ENCODE measurements at regions of chr6 and their contacts with region 1.

Region 1: DNA sequence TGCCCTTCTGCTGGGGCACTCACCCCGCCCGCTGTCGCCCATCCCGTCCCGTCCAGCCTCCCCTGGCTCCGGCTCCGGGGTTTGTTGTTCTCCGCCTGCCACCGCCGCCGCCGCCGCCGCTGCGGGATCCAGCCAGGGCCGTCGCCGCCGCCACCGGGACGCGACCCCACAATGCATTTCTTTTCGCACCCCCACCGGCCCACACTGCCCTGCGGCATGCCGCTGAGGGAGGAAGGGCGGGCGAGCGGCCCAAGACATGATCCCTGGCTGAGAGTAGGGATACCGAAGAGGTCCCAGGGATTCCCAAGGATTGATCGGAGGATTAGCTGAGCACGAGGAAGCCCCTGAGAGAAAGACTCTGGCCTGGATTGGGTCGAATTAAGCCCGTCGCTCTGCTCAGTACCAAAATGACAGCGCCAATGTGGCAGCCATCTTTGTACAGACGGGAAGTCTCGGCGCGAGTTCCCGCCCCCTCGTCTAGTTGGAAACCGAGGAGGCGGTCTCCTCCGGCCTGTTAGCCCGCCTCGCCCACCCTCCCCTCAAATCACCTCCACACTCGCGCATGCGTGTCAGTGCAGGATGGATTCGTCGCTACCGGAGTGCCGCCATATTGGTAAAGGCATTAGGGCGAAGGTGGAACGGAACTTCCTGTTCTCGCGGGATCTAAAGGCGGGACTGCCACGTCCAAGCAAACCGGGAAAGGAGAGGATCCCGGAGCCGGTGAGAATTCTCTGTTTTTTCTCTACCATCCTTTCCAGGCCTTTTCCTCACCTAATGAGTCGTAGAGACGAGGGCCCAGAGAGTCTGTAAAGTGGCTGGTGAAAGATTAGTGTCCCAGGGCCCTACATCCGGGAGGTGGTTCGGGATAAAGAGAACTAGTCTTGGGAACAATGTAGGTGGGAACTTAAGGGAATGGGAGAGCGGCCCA is at the starts of genes RXRB and SLC39A7:
- DNase-seq: peak; percentile 100
- H3K4me3 ChIP-seq: peak within 1 kb of the TSS; percentile 77 to 90 (median 84)
- H3K27ac ChIP-seq: peak within 1 kb of the TSS; percentile 91 to 98 (median 96)
- H3K4me1 ChIP-seq: peaks cover 0 to 68% (median 52%) of the 10 kb centered on the region in 4 donors
- H3K27me3 ChIP-seq: no peaks in the 10 kb centered on the region
- CTCF ChIP-seq: no peak
- EP300 ChIP-seq: peak in 1 of 4 donors; percentile 16
- POLR2A ChIP-seq: peak; percentile 30 to 39
- total RNA-seq, gene RXRB: 27.8 to 32.4 (median 30.4) TPM
- total RNA-seq, gene SLC39A7: 48.7 to 52.1 (median 49.8) TPM

Region 2: GRCh38 chr6:32853541-32854375 is 346.7 kb before region 1 on chr6 and contains the starts of genes PSMB9 and TAP1:
- intact Hi-C with region 1: loop called (anchors 5 kb)
- DNase-seq: peak; percentile 99
- H3K4me3 ChIP-seq: peak within 1 kb of the TSS; percentile 80 to 90 (median 82)
- H3K27ac ChIP-seq: peak within 1 kb of the TSS; percentile 96 to 99 (median 98)
- H3K4me1 ChIP-seq: peaks cover 0 to 35% (median 26%) of the 10 kb centered on the region in 4 donors
- H3K27me3 ChIP-seq: no peaks in the 10 kb centered on the region
- CTCF ChIP-seq: peak; percentile 71 to 89 (median 82)
- EP300 ChIP-seq: peak in 2 of 4 donors; percentile 53 to 69
- POLR2A ChIP-seq: peak; percentile 97 to 98
- total RNA-seq, gene PSMB9: 10.2 to 23.2 (median 13.8) TPM
- total RNA-seq, gene TAP1: 22.5 to 35.0 (median 24.6) TPM

Region 3: GRCh38 chr6:33161354-33162331 is 38.8 kb before region 1 on chr6:
- intact Hi-C with region 1: loop called (anchors 2 kb)
- DNase-seq: peak; percentile 89
- H3K4me3 ChIP-seq: peak overlapping the region; percentile 40 to 58 (median 45)
- H3K27ac ChIP-seq: peak overlapping the region; percentile 72 to 90 (median 79)
- H3K4me1 ChIP-seq: peaks cover 0 to 21% (median 17%) of the 10 kb centered on the region in 4 donors
- H3K27me3 ChIP-seq: no peaks in the 10 kb centered on the region
- CTCF ChIP-seq: peak; percentile 87 to 94 (median 92)
- EP300 ChIP-seq: no peak
- POLR2A ChIP-seq: no peak

Region 4: DNA sequence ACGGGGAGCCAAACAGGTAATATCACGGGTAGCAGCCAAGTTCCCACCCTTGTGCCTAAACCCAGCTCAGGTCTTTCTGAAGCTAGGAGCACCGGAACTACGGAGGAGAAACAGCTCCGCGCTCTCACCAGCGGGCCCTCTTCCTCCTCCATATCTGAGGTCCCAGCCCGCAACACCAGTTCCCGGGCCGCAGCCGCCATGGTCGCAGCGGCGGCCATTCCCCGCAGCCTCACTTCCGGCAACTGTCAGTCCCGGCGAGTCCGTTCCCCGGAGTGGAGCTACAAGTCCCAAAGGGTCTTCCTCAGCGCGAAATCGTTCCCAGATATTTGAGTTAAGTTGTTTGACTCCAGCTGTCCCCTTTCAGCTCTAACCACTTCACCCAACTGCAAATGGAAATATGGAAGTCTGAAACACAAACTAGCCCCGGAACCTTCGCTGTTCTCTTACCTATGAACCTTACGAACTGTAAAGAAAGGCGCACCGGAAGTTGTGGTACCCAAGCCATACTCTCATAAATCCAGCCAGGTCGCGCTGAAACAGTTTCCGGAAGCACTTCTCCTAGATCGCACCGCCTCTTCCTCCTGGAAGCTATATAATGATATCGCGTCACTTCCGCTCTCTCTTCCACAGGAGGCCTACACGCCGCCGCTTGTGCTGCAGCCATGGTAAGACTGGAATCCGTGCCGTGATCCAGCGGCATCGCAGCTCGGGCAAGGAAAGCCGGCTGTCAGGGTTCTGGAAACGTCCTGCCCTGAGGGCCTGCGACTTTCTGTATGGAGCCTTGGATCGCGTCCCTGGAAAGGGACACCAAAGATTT is 71.2 kb after region 1 on chr6 and contains the starts of genes RPS18 and VPS52:
- intact Hi-C with region 1: loop called (anchors 5 kb)
- DNase-seq: peak; percentile 99
- H3K4me3 ChIP-seq: peak within 1 kb of the TSS; percentile 56 to 88 (median 72)
- H3K27ac ChIP-seq: peak within 1 kb of the TSS; percentile 89 to 96 (median 90)
- H3K4me1 ChIP-seq: peaks cover 0 to 61% (median 57%) of the 10 kb centered on the region in 4 donors
- H3K27me3 ChIP-seq: no peaks in the 10 kb centered on the region
- CTCF ChIP-seq: no peak
- EP300 ChIP-seq: peak in 1 of 4 donors; percentile 11
- POLR2A ChIP-seq: peak; percentile 96 to 98
- total RNA-seq, gene RPS18: 2,427 to 4,810 (median 4,005) TPM
- total RNA-seq, gene VPS52: 26.2 to 44.6 (median 33.5) TPM

Region 5: DNA sequence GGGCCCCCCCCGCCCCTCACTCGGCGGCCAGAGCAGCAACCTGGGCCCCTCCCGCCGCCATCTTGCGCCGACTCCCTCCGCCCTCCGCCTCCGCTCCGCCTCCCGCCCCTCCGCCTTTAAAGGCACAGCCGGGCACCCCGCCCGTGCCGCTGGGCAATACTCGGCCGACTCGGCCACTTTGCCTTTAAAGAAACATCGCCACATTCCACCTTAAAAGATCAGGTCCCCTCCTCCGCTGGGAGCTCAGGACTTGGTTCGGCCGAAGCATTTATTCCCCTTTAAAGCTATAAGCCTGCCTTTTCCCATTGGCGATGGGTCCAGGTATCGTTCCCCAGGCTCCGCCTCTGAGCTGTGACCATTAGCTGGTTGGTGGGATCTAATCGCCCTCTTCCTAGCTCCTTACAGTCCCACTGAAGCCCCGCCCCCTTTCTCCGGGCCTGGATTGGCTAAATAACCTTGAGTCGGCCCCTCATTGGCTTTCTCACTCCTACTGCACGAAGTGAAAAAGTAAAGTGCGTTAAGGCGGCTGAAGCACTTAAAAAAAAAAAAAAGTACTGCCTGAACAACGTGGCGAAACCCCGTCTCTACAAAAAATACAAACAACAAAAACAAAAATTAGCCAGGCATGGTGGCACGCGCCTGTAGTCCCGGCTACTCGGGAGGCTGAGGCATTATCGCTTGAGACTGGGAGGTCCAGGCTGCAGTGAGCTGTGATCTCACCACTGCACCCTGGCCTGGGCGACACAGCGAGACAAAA is 117.4 kb after region 1 on chr6 and contains the start of gene ZBTB22:
- intact Hi-C with region 1: no loop called
- DNase-seq: peak; percentile 100
- H3K4me3 ChIP-seq: peak within 1 kb of the TSS; percentile 43 to 59 (median 54)
- H3K27ac ChIP-seq: peak within 1 kb of the TSS; percentile 84 to 87 (median 84)
- H3K4me1 ChIP-seq: peaks cover 0 to 78% (median 62%) of the 10 kb centered on the region in 4 donors
- H3K27me3 ChIP-seq: no peaks in the 10 kb centered on the region
- CTCF ChIP-seq: no peak
- EP300 ChIP-seq: no peak
- POLR2A ChIP-seq: no peak
- total RNA-seq, gene ZBTB22: 9.4 to 13.2 (median 12.7) TPM

Region 6: DNA sequence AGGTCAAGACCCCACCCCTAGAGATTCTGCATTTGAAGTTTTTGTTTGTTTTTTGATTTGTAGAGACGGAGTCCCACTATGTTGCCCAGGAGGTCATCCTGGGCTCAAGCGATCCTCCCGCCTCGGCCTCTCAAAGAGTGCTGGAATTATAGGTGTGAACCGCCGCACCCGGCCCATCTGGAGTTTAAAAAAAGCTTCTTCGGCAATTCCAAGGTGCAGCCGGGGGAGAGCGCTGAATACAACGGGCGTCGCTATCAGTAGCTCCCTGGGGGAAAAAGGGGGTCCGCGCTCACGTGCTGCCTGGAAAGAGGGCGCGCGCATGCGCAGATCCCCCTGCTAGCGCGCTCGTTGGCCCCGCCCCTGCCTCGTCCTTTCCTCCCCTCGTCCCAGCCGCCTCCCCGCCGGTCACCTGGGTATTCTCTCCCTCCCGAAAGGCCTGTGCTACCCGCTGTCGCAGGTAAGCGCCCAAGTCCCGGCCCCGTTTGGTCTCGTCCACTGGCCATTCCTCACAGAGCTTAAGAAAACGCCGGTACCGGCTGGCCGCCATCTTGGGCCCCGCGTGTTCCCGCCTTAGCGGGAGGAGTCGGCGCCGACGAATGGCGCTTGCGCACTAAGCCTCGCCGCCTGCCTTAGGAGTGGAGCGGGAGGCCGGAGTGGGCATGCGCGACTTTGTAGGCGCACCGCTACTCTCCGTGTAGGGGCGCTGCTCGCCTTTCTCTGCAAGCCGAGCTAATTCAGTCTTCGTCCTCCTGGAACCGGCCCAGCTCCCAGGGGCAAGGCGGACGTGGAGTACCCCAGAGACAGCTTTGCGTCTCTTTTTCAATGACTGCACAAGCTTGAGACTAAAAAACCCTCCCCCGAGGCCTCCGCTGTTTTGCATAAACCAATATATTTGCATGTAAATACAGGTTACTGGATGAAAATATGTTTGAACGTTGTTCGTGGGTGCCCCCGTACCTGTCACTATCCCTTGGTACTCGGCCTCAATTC is 511.0 kb after region 1 on chr6 and contains the start of gene UQCC2:
- intact Hi-C with region 1: loop called (anchors 5 kb)
- DNase-seq: peak; percentile 99
- H3K4me3 ChIP-seq: peak within 1 kb of the TSS; percentile 66 to 82 (median 77)
- H3K27ac ChIP-seq: peak within 1 kb of the TSS; percentile 90 to 96 (median 93)
- H3K4me1 ChIP-seq: peaks cover 0 to 19% (median 16%) of the 10 kb centered on the region in 4 donors
- H3K27me3 ChIP-seq: no peaks in the 10 kb centered on the region
- CTCF ChIP-seq: peak in 3 of 4 experiments; percentile 37 to 62 (median 60)
- EP300 ChIP-seq: no peak
- POLR2A ChIP-seq: peak; percentile 78 to 80
- total RNA-seq, gene UQCC2: 9.5 to 34.9 (median 28.7) TPM

Measured in sigmoid colon (tissue), 7 donors.